HCT116 (cell line): ENCODE measurements at regions of chr4 and their contacts with region 1.

Region 1: DNA sequence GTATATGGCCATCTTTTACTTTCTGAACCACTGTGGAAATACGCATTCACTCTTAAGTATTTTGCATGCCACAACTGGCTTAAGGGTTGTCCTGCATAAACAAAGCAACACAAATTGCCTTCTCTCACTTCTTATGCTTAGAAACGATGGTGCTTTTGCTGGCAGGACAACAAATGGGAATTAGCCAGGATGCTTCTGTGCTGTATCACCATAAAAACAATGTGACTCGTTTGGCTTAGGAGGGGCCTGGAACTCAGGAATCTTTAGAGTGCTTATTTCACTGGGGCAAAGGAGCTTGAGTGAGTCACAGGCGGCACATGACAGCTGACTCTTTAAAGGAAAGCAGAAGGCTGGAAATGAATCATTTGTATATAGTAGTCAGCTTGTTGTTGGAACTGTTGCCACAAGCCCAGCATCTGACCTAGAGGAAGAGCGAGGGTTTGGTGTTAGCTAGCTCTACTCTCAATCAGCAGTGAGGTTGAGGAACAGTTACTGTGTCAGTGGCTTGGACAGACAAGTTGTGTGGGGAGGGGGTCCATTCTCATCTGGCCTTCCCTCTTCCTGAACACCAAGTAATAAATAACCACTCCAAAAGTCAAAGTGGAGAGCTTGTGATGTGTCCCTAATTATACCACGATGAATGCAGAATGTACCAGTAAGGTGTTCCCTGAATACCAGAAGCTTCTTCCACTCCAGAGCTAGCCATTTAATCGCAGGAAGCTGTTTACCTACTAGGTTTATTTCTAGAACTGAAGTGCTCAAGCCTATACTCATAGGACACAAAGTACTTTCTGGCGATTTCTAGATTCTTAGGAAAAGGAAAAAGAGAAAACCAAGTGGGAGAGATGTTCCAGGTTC is 293.1 kb downstream of the CAMK2D start:
- DNase-seq: peak; percentile 98
- ATAC-seq: peak; percentile 90
- H3K4me3 ChIP-seq: peak overlapping the region; percentile 4 to 35; a peak in 3 of 4 replicates
- H3K27ac ChIP-seq: peak overlapping the region; percentile 77
- H3K4me1 ChIP-seq: peaks cover 51 to 70% of the 10 kb centered on the region in 2 experiments
- H3K27me3 ChIP-seq: no peaks in the 10 kb centered on the region
- CTCF ChIP-seq: no peak
- POLR2A ChIP-seq: no peak
- RAD21 ChIP-seq: peak; percentile 52

Region 2: GRCh38 chr4:113445286-113445685 is 23.1 kb before region 1 on chr4:
- CTCF ChIA-PET with region 1: no interaction called
- POLR2A ChIA-PET with region 1: interaction called, 13 read pairs
- RAD21 ChIA-PET with region 1: interaction called, 3 read pairs
- intact Hi-C with region 1: loop called (anchors 1 kb)
- DNase-seq: no peak
- ATAC-seq: peak; percentile 13; the same call in 1 of the 2 replicates
- H3K4me3 ChIP-seq: 0 out of 4 replicates have a peak overlapping the region, but pooled peaks of 1 of the 2 experiments have one; percentile 21
- H3K27ac ChIP-seq: peak overlapping the region; percentile 88
- H3K4me1 ChIP-seq: peaks cover 53 to 66% of the 10 kb centered on the region in 2 experiments
- H3K27me3 ChIP-seq: no peaks in the 10 kb centered on the region
- CTCF ChIP-seq: no peak
- POLR2A ChIP-seq: no peak
- RAD21 ChIP-seq: no peak

Region 3: DNA sequence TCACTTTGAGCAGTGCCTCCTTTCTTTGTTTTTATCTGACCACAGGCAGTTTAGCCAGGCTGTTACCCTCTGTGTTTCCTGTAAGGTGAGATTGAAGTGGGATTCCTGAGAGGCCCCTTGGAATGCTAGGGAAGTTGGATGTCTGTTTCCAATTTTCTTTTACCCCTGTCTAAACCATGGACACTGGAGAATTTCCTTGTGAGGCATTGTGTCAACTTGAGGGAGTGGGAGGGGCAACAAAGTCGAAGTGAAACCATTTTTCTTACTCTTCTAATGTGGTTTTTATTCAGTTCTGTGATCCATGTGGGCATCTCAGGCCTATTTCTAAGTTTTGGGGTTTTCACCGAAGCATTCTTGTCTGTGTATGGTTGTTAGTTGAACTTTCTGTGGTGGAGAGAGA is 834.1 kb after region 1 on chr4:
- CTCF ChIA-PET with region 1: no interaction called
- POLR2A ChIA-PET with region 1: no interaction called
- RAD21 ChIA-PET with region 1: no interaction called
- intact Hi-C with region 1: no loop called
- DNase-seq: no peak
- ATAC-seq: no peak
- H3K4me3 ChIP-seq: no peak overlapping the region
- H3K27ac ChIP-seq: no peak overlapping the region
- H3K4me1 ChIP-seq: no peaks in the 10 kb centered on the region
- H3K27me3 ChIP-seq: no peaks in the 10 kb centered on the region
- CTCF ChIP-seq: no peak
- POLR2A ChIP-seq: no peak
- RAD21 ChIP-seq: no peak